ENCODE measurements at regions of chr20 and their contacts with region 1.

Region 1: DNA sequence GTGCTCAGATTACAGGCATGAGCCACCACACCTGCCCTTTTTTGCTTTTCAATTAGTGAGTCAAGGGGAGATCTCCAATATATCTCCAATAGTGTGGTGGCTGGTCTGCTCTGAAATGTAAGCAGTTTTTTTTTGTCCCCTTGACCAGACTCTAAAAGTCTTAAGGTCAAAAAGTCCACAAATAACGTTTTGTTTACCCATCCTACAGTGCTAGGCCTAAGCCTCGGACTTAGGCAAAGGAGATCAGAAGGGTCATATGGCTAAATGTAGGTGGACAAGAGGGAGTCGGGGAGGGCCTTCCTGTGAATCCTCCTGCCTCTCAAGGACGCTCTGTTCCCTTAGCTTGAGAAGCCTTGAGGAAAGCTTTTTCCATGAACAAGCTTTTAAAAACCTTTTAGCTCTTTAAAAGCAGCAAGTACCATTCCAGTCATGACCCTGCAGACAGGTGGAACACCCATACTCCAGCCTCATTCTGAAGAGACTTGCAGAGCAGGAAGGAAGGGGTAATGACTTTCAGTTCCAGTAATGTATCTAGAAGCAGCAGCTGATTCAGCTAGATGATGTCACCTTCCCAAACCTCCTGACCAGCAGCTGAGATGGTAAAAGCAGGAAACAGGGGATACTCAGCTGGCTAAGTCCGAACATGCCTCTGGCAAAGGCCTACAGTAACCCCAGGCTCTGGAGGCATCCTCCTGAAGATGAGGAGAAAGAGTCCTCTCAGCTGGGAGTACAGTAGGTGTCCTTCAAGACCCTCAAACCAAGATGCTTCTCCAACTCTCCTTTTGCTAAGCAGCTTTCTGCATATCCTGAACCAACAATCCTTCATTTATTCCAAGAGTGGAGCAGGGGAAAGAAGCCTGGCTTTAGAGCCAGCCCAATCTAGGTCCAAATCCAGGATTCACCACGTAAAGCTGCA is 23.6 kb downstream of the BCL2L1 start:
- DNase-seq: peak; percentile 87
- H3K4me3 ChIP-seq: no peak overlapping the region
- CTCF ChIP-seq: no peak

Region 2: DNA sequence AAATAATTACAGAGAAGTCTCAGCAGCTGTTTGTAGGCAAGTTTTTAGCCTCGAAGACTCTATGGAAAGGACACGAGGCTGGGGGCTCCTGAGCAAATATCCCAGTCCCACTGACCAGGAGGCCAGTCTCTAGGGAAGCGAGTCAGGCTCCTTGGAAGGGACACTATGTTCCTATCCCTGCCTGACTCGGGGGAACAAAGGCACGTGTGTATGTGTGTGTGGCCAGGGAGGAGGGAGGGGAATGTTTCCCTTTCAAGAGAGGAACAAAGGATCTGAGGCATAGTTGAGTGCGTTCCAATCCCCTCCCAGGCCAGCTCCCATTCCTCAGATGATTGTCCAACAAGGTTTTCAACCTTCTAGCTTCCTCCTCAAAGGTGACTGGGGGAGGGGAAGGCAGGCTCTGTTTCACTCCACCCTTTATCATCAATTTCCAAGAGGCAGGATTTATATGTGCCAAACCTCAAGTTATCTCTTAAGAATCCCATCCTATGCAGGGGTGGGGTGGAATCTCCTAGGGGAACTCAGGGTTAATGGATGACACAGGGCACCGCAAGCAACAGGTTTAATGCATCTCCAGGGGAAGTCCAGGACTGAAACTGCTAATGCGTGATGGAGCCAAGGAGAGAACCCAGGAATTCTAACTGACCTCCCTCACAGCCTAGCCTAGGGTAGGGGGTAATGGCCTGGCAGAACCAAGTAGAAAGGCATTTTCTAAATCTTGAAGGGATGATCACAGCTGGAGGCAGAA is 13.7 kb after region 1 on chr20:
- CTCF ChIA-PET with region 1: interaction called, 16 read pairs
- POLR2A ChIA-PET with region 1: interaction called, 12 read pairs
- DNase-seq: no peak
- H3K4me3 ChIP-seq: peak overlapping the region; percentile 43
- CTCF ChIP-seq: no peak